ENCODE measurements at regions of chr22 and their contacts with region 1.

Region 1: DNA sequence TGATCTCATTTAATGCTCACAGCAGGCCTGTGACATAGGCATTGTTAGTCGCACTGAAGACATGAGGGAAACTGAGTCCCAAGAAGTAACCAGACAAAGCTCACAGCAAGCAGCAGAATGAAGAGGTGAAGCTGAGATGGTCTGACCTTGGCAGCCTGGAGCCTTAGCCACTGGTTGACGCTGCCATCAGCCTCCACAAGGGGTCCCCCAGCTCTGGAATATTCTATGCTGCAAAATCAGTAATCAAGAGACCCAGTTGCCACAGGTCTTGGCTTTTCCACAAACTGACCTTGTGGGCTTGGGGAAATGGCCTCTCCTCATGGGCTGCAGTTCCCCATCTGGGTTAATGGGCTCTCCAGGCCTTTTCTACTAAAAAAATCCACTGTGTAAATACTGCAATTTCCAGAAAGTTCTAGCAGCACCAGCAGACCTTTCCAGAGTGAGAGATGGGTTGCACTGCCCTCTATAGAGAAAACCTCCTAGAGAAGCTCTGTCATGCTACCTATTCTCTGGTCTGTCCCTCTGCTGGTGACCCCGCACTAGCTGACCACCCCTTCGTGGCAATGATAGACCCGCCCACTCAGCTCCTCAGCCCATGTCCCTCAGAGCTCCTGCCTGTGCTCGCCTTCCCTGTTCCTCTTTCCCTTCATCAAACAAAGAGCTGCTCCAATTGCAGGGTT is 22.6 kb upstream of the ISX start:
- DNase-seq: no peak
- H3K4me3 ChIP-seq: no peak overlapping the region
- H3K27ac ChIP-seq: no peak overlapping the region
- H3K4me1 ChIP-seq: no peaks in the 10 kb centered on the region
- H3K27me3 ChIP-seq: no peaks in the 10 kb centered on the region
- CTCF ChIP-seq: no peak

Region 2: GRCh38 chr22:34645375-34645774 is 398.0 kb before region 1 on chr22:
- CTCF ChIA-PET with region 1: no interaction called
- dilution Hi-C with region 1: no loop called
- in situ Hi-C with region 1: no loop called
- intact Hi-C with region 1: no loop called
- DNase-seq: no peak
- H3K4me3 ChIP-seq: no peak overlapping the region
- H3K27ac ChIP-seq: no peak overlapping the region
- H3K4me1 ChIP-seq: no peaks in the 10 kb centered on the region
- H3K27me3 ChIP-seq: no peaks in the 10 kb centered on the region
- CTCF ChIP-seq: no peak

Region 3: DNA sequence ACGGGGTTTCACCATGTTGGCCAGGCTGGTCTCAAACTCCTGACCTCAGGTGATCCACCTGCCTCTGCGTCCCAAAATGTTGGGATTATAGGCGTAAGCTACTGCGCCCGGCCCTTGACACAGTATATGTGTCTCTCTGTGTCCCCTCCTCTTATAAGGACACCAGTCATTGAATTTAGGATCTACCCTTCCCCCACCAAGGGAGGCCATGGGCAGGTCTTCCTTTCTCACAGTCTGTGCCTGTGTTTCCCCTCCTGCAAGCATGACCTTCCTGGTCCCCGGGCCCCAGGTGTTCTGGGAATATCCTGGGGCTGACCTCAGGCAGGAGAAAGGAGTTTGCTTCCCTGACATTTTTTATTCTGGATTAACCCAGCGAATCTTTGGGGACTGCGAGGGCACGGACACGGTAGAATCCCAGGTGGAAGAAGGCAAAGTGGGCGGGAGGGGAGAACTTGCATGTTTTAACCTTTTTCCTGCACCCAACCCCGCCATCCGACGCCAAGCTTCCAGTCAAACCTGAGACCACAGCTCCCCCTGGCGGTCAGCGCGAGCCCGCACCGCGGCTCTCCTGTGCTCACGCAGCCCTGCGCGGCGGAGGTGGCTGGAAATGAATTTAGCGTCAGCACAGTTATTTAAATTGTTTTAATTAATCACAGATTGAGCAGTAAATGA is 19.6 kb before region 1 on chr22:
- CTCF ChIA-PET with region 1: no interaction called
- dilution Hi-C with region 1: no loop called
- in situ Hi-C with region 1: no loop called
- intact Hi-C with region 1: no loop called
- DNase-seq: peak; percentile 32
- H3K4me3 ChIP-seq: no peak overlapping the region
- H3K27ac ChIP-seq: no peak overlapping the region
- H3K4me1 ChIP-seq: no peaks in the 10 kb centered on the region
- H3K27me3 ChIP-seq: no peaks in the 10 kb centered on the region
- CTCF ChIP-seq: peak; percentile 39 to 75

Region 4: DNA sequence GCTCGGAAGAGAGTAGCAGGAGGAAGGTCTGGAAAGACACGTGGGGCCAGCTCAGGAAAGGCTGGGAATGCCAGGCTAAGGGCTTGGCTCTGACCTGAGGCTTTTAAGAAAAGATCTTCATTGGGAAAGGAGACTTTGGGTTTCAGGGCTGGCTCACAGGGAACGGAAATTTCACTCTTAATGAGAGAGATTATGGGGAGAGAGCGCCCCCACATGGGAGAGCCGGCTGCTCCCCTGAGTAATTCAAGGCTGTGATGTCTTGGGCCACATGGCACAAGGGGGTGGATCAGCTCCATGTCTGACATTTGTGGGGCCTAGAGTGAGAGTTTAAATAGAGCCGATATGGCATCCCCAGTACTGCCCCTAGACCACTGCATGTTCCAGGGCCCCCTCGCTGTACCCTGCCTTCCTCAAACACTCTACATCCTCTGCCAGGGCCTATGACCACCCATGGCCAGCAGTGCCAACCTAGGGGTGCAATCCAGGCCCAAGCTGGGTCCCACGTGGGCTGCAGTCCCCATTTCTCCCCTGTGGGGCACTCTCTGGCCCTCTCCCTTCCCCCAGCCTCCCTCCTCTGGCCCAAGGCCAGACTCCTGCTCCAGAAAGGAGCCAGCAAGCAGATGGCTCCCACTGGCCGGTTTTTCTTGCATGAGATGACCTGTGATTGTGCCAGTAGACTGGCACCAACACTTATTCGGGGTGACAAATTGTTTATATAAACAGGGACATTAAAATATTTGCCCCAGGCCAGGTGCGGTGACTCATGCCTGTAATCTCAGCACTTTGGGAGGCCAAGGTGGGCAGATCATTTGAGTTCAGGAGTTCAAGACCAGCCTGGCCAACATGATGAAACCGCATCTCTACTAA is 97.7 kb after region 1 on chr22:
- CTCF ChIA-PET with region 1: no interaction called
- dilution Hi-C with region 1: no loop called
- in situ Hi-C with region 1: no loop called
- intact Hi-C with region 1: loop called (anchors 1 kb)
- DNase-seq: no peak
- H3K4me3 ChIP-seq: no peak overlapping the region
- H3K27ac ChIP-seq: no peak overlapping the region
- H3K4me1 ChIP-seq: no peaks in the 10 kb centered on the region
- H3K27me3 ChIP-seq: no peaks in the 10 kb centered on the region
- CTCF ChIP-seq: no peak

Measured in mammary epithelial cell (primary cell).